ENCODE measurements at regions of chr2 and their contacts with region 1.

Region 1: GRCh38 chr2:127072970-127073369 is 34.0 kb downstream of the BIN1 start:
- DNase-seq: peak in 2 of 5 donors; percentile 43 to 67
- H3K4me3 ChIP-seq: no peak overlapping the region
- H3K27ac ChIP-seq: peak overlapping the region; percentile 30 to 58
- H3K4me1 ChIP-seq: peaks cover 12% of the 10 kb centered on the region
- H3K27me3 ChIP-seq: no peaks in the 10 kb centered on the region
- CTCF ChIP-seq: no peak
- EP300 ChIP-seq: no peak
- POLR2A ChIP-seq: no peak

Region 2: DNA sequence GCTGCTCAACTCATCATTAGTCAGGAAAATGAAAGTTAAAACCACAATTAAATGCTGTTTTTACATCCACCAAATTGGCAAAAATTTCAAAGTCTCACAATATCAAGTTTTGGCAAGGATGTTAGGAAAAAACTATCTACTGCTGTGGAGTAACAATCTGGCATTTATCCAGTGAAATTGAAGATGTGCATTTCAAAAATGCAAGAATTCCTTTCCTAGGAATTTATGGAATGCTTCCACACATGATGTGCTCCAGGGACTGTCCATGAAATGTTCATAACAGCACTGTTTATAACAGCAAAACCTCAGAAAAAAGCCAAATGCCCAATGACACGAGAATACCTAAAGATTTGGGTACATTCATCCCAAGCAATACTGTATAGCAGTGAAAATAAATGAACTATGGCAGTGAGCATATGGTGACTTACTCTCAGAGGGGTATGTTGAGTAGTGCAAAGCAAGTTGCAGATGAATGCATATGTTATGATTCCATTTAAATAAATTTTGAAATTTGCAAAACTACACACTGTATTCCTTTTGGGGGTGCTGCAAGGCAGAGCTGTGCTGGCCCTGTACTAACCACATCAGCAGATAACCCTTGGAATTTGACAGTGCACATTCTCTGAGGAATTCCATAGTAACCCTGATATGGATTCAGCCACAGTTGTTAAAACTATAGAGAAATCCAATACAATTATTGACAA is 458.3 kb before region 1 on chr2:
- intact Hi-C with region 1: no loop called
- DNase-seq: no peak
- H3K4me3 ChIP-seq: no peak overlapping the region
- H3K27ac ChIP-seq: no peak overlapping the region
- H3K4me1 ChIP-seq: no peaks in the 10 kb centered on the region
- H3K27me3 ChIP-seq: no peaks in the 10 kb centered on the region
- CTCF ChIP-seq: no peak
- EP300 ChIP-seq: no peak
- POLR2A ChIP-seq: no peak

Region 3: GRCh38 chr2:127161176-127162136 is 88.5 kb after region 1 on chr2:
- intact Hi-C with region 1: loop called in 2 of 4 experiments (anchors 5 kb)
- DNase-seq: peak in 1 of 5 donors; percentile 54
- H3K4me3 ChIP-seq: no peak overlapping the region
- H3K27ac ChIP-seq: peak overlapping the region in 1 of 2 donors; percentile 46
- H3K4me1 ChIP-seq: peaks cover 2% of the 10 kb centered on the region
- H3K27me3 ChIP-seq: no peaks in the 10 kb centered on the region
- CTCF ChIP-seq: no peak
- EP300 ChIP-seq: no peak
- POLR2A ChIP-seq: no peak